ENCODE measurements at regions of chr20 and their contacts with region 1.

Region 1: DNA sequence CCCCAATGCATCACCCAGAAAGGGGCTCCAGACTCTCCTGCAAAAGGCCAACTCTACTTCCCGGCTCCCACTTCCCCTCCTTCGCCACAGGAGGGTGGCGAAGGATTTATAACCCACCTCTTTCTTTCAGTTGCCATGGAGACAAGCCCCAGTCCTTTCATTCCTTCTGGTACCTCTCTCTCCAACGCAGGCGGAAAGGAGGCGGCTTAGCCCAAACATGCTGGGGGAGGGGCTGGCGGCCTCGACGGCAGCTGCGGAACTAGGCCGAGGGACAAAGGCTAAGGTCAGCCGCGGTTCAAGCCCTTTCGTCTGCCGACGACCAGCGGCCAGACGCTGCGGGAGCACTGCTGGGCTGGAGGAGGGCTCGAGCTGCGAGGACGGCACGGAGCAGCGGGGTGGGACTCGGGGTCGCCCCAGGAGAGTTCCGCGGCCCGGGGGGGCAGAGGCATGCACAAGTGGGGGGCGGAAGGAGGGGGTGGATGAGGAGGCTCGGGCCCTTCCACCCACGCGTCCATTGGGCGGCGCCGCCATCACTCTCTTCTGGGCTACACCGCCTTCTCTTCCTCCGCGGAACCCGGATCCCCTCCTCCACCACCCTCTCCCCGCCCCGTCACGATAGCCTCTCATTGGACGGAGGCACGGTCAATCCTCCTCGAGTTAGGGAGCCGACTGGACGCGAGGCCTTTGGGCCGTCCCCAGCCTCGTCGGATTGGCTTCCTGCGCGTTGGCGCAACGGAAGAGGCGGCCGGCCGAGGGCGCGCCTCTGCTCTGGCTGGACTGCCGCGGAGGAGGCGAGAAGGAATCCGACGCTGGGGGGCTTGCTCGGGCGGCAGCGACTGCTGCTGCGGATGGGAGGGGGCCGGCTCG is at the start of gene PANK2:
- DNase-seq: peak; percentile 98
- ATAC-seq: peak; percentile 94
- H3K4me3 ChIP-seq: peak within 1 kb of the TSS; percentile 76
- H3K27ac ChIP-seq: peak within 1 kb of the TSS; percentile 97
- H3K4me1 ChIP-seq: peaks cover 11% of the 10 kb centered on the region
- H3K27me3 ChIP-seq: no peaks in the 10 kb centered on the region
- CTCF ChIP-seq: peak; percentile 66
- POLR2A ChIP-seq: peak; percentile 93
- RAD21 ChIP-seq: peak; percentile 67
- total RNA-seq, gene PANK2: 28.1 and 47.8 TPM in 2 replicates

Region 2: GRCh38 chr20:3919352-3919751 is 30.5 kb after region 1 on chr20:
- CTCF ChIA-PET with region 1: no interaction called
- POLR2A ChIA-PET with region 1: no interaction called
- dilution Hi-C with region 1: no loop called
- in situ Hi-C with region 1: no loop called
- intact Hi-C with region 1: loop called (anchors 1 kb)
- DNase-seq: peak; percentile 54
- ATAC-seq: peak; percentile 25; the same call in 1 of the 2 replicates
- H3K4me3 ChIP-seq: no peak overlapping the region
- H3K27ac ChIP-seq: no peak overlapping the region
- H3K4me1 ChIP-seq: peaks cover 13% of the 10 kb centered on the region
- H3K27me3 ChIP-seq: no peaks in the 10 kb centered on the region
- CTCF ChIP-seq: no peak
- POLR2A ChIP-seq: no peak
- RAD21 ChIP-seq: no peak

Region 3: DNA sequence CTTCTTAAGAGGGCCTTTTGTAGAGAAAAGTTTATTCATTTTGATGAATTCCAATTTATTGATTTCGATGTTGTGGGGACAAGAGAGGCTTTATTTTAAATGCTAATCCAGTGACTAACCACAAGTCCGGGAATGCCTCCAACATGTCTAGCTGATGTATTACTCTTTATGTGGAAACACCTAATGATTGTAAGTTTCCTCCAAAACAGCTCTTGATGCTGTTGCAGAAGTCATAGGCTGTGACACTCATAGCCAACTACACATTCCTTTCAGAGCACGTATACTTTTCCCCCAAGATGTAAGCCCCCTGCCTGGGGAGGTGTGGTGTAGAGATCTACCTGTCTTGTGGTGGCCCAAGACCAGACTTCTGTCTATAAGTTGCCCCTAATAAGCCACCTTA is 187.8 kb after region 1 on chr20:
- CTCF ChIA-PET with region 1: interaction called, 4 read pairs
- POLR2A ChIA-PET with region 1: interaction called, 3 read pairs
- dilution Hi-C with region 1: no loop called
- in situ Hi-C with region 1: loop called (anchors 10 kb)
- intact Hi-C with region 1: loop called (anchors 5 kb)
- DNase-seq: peak; percentile 95
- ATAC-seq: peak; percentile 60
- H3K4me3 ChIP-seq: no peak overlapping the region
- H3K27ac ChIP-seq: peak overlapping the region; percentile 19; the same call in 1 of the 2 replicates
- H3K4me1 ChIP-seq: peaks cover 6% of the 10 kb centered on the region
- H3K27me3 ChIP-seq: no peaks in the 10 kb centered on the region
- CTCF ChIP-seq: no peak
- POLR2A ChIP-seq: no peak
- RAD21 ChIP-seq: no peak

Region 4: DNA sequence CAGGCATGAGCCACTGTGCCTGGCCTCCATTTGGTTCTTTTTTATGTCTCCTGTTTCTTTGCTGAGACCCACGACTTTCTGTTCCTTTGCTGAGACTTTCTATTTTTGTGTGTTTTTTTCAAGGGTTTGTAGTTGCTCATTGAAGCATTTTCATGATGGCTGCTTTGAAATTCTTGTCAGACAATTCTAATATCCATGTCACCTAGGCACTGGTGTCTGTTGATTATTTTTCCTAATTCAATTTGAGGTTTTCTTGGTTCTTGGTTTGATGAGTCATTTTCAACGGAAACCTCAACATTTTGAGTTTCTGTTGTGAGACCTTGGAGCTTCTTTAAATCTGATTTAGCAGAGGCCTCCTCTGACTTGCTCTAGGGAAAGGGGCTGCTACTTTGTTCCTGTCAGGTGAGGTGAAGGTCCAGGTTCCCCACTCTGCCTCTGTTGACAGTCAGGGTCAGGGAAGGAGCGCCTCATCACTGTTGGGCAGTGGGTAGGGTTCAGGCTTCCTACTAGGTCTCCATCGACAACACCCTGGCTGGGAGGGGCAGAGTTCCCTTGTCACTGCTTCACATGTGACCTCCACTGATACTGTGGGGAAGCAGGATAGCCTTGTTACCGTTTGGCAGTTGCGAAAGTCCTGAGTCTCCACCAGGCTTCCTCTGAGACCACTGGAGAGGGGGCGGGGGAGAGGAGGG is 193.7 kb after region 1 on chr20:
- CTCF ChIA-PET with region 1: interaction called, 6 read pairs
- POLR2A ChIA-PET with region 1: no interaction called
- dilution Hi-C with region 1: no loop called
- in situ Hi-C with region 1: loop called (anchors 10 kb)
- intact Hi-C with region 1: loop called (anchors 2 kb)
- DNase-seq: peak; percentile 82
- ATAC-seq: peak; percentile 40
- H3K4me3 ChIP-seq: peak overlapping the region; percentile 12; the same call in 1 of the 2 replicates
- H3K27ac ChIP-seq: peak overlapping the region; percentile 97
- H3K4me1 ChIP-seq: peaks cover 22% of the 10 kb centered on the region
- H3K27me3 ChIP-seq: no peaks in the 10 kb centered on the region
- CTCF ChIP-seq: no peak
- POLR2A ChIP-seq: no peak
- RAD21 ChIP-seq: no peak

Region 5: GRCh38 chr20:4234128-4234527 is 345.3 kb after region 1 on chr20:
- CTCF ChIA-PET with region 1: no interaction called
- POLR2A ChIA-PET with region 1: no interaction called
- dilution Hi-C with region 1: no loop called
- in situ Hi-C with region 1: no loop called
- intact Hi-C with region 1: no loop called
- DNase-seq: peak; percentile 76
- ATAC-seq: peak; percentile 71
- H3K4me3 ChIP-seq: no peak overlapping the region
- H3K27ac ChIP-seq: no peak overlapping the region
- H3K4me1 ChIP-seq: peaks cover 3% of the 10 kb centered on the region; the same call in 1 of the 2 replicates
- H3K27me3 ChIP-seq: no peaks in the 10 kb centered on the region
- CTCF ChIP-seq: no peak
- POLR2A ChIP-seq: no peak
- RAD21 ChIP-seq: no peak

Measured in IMR-90 (cell line).